Testis (tissue), 5 donors: ENCODE measurements at regions of chr2 and their contacts with region 1.

Region 1: DNA sequence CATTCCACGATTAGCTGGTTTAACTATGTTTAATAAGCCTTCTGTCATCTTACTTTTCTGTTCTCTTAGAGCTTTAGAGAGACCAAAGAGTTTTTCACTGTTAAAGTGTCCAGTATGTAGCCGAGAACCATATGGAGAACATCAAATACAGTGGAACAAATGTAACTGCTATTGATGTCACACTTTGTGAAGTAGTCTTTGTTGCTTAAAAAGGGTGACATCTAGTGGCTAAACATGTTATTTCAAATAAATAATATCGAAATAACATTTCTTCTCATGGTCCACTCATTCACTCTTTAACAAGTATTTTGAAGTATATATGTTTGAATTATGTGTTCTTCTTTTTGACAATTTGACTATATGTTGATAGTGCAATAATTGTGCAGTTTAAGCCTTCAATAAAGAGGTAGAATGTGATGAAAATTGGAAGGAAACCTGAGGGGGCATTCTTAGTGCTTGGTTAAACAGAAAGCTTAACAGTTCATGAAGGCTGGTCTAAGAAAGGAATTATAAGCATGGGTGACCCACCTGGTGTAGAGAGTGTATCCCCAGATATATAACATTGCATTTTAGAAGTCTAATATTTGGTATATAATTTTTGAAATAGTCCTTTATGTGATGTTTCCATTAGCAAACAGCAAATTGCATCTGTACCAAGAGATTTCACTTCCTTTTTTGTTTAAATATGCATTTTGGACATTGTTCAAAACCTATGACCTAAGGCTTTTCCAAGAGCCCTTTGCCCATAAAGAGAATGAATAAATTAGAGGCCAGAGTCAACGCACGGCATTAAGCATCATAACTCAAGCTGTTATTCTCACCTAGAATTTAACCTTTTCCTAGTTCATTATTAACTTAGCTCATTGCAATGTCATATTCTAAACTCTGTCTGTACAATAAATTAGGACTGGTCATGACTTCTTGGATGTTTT is 112.1 kb downstream of the KYNU start:
- DNase-seq: no peak
- H3K4me3 ChIP-seq: no peak overlapping the region
- H3K27ac ChIP-seq: no peak overlapping the region
- H3K4me1 ChIP-seq: no peaks in the 10 kb centered on the region
- H3K27me3 ChIP-seq: no peaks in the 10 kb centered on the region
- CTCF ChIP-seq: peak in 2 of 3 experiments; percentile 33 to 58
- POLR2A ChIP-seq: no peak

Region 2: DNA sequence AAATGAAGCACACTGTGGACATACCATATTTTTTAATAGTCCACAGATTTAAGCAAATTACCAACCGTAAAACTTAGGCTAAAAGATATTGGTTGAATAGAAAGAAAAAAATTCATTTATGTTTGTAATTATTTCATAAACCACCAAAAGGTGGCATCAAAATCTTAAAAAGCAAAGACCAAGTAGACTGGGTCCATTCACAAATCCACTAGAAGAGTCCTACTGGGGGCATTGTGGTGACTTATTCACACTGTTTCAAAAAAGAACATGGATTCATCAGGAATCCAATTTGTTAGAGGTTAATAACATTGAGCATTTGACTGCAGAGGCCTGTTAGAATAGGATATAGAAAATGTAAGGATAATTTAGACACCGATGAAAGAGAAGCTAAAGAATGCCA is 307.0 kb before region 1 on chr2:
- intact Hi-C with region 1: loop called (anchors 10 kb)
- DNase-seq: no peak
- H3K4me3 ChIP-seq: no peak overlapping the region
- H3K27ac ChIP-seq: no peak overlapping the region
- H3K4me1 ChIP-seq: no peaks in the 10 kb centered on the region
- H3K27me3 ChIP-seq: no peaks in the 10 kb centered on the region
- CTCF ChIP-seq: peak in 1 of 3 experiments; percentile 19
- POLR2A ChIP-seq: no peak